Psoas muscle (tissue), 8 donors: ENCODE measurements at regions of chr1 and their contacts with region 1.

Region 1: DNA sequence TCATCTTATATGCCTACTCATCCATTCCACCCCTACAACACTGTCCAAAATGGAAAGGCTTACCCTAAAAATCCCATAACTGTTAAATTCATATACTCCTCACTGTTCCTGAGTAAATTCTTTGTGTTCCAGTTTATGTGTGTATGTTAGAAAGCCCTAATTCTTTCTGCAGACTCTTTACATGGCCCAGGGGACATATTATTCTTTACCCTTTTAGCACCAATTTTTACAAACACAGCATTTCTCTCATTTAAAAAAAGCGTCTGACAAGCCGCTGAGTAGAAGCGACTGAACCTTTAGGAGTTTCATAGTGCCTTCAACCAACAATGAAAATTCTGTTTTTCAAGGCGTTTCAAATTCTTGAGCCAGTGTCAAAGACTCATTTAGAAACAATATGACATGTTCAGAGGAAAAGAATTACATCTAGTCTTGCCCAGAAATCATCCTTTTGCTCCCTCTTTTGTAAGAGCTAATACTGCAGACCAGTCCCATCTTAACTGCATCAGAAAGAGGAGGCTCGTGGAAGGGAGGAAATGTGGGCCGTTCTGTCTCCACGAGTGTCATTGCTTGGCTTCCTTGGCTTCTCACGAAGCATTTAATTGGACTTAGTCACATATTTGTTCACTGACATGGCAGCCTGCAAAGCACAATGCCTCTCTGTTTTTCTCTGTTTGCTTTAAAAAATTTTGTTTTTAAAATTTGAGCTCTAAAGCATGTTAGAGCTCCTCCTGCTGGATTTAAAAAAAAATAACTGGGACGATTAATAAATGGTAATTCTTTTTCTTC is 21.3 kb upstream of the C1orf105 start:
- DNase-seq: peak; percentile 53 to 68
- ATAC-seq: peak; percentile 47 to 89 (median 81)
- H3K4me3 ChIP-seq: peak overlapping the region; percentile 16
- H3K27ac ChIP-seq: peak overlapping the region; percentile 56
- H3K4me1 ChIP-seq: no peaks in the 10 kb centered on the region
- H3K27me3 ChIP-seq: no peaks in the 10 kb centered on the region
- CTCF ChIP-seq: peak; percentile 51

Region 2: DNA sequence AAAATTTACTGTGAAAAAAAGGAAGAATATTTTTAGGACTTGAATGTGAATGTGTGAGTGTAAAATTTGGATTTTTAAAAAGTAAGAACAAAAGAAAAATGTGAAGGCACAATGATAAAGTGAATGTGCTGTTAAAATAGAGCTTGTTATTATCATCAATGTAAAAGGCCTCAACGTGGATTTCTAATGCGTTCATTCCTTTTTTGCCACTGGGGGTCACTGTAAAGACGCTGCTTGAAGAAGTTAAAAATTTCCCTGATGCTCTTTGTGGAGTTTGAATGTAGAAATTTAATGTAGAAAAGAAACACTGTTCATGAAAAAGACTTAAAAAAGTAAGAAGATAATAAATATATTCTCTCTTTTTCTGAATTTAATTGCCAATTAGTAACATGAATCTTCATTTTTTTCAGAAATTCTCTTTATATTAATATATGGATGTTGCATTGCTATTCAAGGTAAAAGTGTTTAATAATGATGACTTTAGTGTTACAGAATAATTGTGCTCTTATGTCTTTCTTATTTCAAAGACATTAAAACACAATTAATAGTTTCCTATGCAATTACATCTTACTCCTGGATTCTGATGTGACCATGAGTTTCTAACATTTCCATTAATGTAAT is 396.3 kb before region 1 on chr1:
- intact Hi-C with region 1: loop called in 1 of 2 experiments (anchors 5 kb)
- DNase-seq: no peak
- ATAC-seq: peak in 1 of 4 donors; percentile 44
- H3K4me3 ChIP-seq: no peak overlapping the region
- H3K27ac ChIP-seq: no peak overlapping the region
- H3K4me1 ChIP-seq: no peaks in the 10 kb centered on the region
- H3K27me3 ChIP-seq: no peaks in the 10 kb centered on the region
- CTCF ChIP-seq: peak; percentile 50

Region 3: DNA sequence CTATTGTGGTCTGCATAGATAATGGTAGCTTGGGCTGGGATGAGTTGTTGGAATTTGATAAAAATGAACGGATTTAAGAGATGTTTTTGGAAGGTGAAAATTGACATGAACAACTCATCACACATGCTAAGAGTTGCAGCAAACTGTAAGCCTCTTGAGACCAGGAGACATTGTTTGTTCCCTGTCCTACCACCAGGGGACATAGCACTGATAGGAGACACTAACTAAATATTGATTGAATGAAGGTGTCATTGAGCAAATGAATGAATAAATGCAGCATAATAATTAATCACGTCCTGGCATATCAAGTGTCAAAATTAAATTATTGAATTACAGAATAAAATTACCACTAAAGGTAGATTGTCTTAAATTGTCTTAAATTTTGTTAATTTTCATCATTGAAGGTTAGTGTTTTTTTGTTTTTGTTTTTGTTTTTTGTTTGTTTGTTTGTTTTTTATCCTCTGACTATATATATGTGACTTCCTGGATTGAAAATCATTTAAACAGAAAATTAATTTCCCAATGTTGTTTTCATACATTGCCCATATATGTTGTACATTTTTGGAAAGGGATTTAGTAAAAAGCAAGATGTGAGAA is 264.0 kb before region 1 on chr1:
- intact Hi-C with region 1: loop called in 1 of 2 experiments (anchors 5 kb)
- DNase-seq: no peak
- ATAC-seq: peak in 1 of 4 donors; percentile 46
- H3K4me3 ChIP-seq: no peak overlapping the region
- H3K27ac ChIP-seq: no peak overlapping the region
- H3K4me1 ChIP-seq: no peaks in the 10 kb centered on the region
- H3K27me3 ChIP-seq: no peaks in the 10 kb centered on the region
- CTCF ChIP-seq: peak; percentile 53